T-cell (primary cell): ENCODE measurements at regions of chr6 and their contacts with region 1.

Region 1: DNA sequence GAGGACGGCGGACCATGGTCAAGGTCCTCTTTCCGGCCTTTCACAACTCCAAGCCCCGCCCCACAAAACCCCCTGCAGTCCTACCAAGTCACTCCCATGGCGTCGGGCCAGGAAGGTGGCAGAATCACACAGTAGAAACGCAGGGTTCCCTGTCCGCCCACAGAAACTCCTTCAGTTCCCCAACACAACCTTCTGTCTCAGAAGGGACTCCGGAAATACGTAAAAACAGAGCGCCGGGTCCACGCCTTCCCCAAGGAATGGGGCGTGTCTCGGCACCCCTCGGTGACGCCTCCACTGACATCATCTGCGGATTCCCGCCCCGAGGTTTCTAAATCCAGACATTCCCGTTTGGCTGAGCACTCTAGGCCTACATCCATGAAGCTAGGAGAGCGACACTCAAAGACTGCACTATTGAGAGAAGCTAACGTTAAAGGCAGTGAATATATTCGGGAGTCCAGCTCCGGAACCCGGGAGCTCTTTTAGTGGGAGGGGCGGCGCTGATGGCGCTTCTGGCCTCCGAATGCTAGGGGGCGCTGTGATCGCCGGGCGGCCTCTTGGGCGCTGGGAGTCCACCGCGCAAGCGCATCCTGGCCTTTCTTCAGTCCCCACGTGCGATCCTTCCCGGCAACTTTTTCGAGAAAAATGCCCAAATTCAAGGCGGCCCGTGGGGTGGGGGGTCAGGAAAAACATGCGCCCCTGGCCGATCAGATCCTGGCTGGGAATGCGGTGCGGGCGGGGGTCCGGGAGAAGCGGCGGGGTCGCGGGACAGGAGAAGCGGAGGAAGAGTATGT is at the starts of genes BYSL and MED20:
- DNase-seq: peak; percentile 86 to 96 (median 91)
- ATAC-seq: peak; percentile 89 to 91 (median 90)
- H3K4me3 ChIP-seq: peak within 1 kb of the TSS; percentile 93 to 99
- H3K4me3 Mint-ChIP-seq: peak within 1 kb of the TSS; percentile 89 to 99 (median 99)
- H3K27ac ChIP-seq: peak within 1 kb of the TSS; percentile 91
- H3K27ac Mint-ChIP-seq: peak within 1 kb of the TSS; percentile 98 to 99
- H3K4me1 ChIP-seq: peaks cover 20 to 47% of the 10 kb centered on the region in 2 experiments
- H3K4me1 Mint-ChIP-seq: peaks cover 57 to 60% (median 58%) of the 10 kb centered on the region in 3 donors
- H3K27me3 ChIP-seq: no peaks in the 10 kb centered on the region
- H3K27me3 Mint-ChIP-seq: peaks cover 0 to 2% of the 10 kb centered on the region in 2 donors
- total RNA-seq, gene BYSL: 3.5 to 20.5 (median 15.0) TPM
- total RNA-seq, gene MED20: 5.4 to 12.1 (median 11.1) TPM

Region 2: GRCh38 chr6:41895300-41896233 is 25.5 kb before region 1 on chr6 and contains the start of gene USP49:
- CTCF ChIA-PET with region 1: interaction called in 1 of 2 experiments, 23 read pairs
- POLR2A ChIA-PET with region 1: no interaction called
- DNase-seq: peak; percentile 77 to 94 (median 88)
- ATAC-seq: peak; percentile 94 to 98 (median 96)
- H3K4me3 ChIP-seq: peak within 1 kb of the TSS; percentile 85 to 92
- H3K4me3 Mint-ChIP-seq: no peak within 1 kb of the TSS
- H3K27ac ChIP-seq: peak within 1 kb of the TSS; percentile 59
- H3K27ac Mint-ChIP-seq: peak within 1 kb of the TSS; percentile 70 to 88
- H3K4me1 ChIP-seq: peaks cover 15 to 21% of the 10 kb centered on the region in 2 experiments
- H3K4me1 Mint-ChIP-seq: peaks cover 9 to 17% (median 11%) of the 10 kb centered on the region in 3 donors
- H3K27me3 ChIP-seq: peaks cover 0 to 6% of the 10 kb centered on the region in 2 experiments
- H3K27me3 Mint-ChIP-seq: no peaks in the 10 kb centered on the region
- total RNA-seq, gene USP49: 2.5 to 5.2 (median 3.3) TPM

Region 3: GRCh38 chr6:41941280-41942066 is 20.4 kb after region 1 on chr6 and contains the start of gene CCND3:
- CTCF ChIA-PET with region 1: interaction called, 4 to 26 read pairs
- POLR2A ChIA-PET with region 1: interaction called in 1 of 2 experiments, 3 read pairs
- DNase-seq: peak; percentile 61 to 90 (median 77)
- ATAC-seq: peak; percentile 71 to 75 (median 74)
- H3K4me3 ChIP-seq: peak within 1 kb of the TSS; percentile 73 to 91
- H3K4me3 Mint-ChIP-seq: peak within 1 kb of the TSS; percentile 81 to 93 (median 87)
- H3K27ac ChIP-seq: peak within 1 kb of the TSS; percentile 66
- H3K27ac Mint-ChIP-seq: peak within 1 kb of the TSS; percentile 89 to 92
- H3K4me1 ChIP-seq: peaks cover 56 to 66% of the 10 kb centered on the region in 2 experiments
- H3K4me1 Mint-ChIP-seq: peaks cover 63 to 75% (median 74%) of the 10 kb centered on the region in 3 donors
- H3K27me3 ChIP-seq: no peaks in the 10 kb centered on the region
- H3K27me3 Mint-ChIP-seq: no peaks in the 10 kb centered on the region
- total RNA-seq, gene CCND3: 265 to 532 (median 284) TPM

Region 4: DNA sequence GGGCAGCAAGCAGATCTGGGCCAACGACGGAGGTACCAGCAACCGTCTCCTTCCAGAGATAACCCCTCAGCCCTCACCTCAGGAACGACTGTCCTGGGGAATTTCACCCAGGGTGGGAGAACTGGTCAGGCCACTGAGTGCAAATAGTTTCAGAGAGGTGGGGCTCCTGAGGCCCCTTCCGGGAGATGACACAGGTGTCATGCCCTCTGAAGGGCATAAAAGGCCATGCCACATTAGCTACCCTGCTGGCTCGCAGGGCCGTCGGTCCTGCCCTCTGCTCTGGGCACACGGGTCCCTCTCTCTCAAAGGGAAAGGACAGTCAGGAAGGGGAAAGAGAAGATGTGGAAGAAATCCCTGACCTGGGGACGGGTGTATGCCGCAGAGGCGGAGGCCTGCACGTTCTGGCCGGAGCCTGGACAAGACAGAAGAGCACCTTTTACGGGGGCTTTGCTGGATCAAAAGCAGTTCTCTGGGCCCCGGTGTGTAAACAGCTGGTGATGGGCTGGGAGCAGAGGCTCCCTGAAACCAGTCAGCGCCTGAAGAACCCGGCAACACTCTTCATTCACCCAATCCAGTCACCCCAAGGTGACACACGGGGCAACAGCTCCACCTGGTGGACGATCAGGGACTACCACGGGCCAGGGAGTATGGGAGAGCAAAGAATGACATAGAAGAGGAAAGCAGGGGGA is 122.8 kb after region 1 on chr6:
- CTCF ChIA-PET with region 1: interaction called, 6 to 27 read pairs
- POLR2A ChIA-PET with region 1: no interaction called
- DNase-seq: peak; percentile 78 to 96 (median 91)
- ATAC-seq: peak; percentile 21 to 28 (median 24)
- H3K4me3 ChIP-seq: peak overlapping the region; percentile 44 to 60
- H3K4me3 Mint-ChIP-seq: peak overlapping the region; percentile 72 to 99 (median 73)
- H3K27ac ChIP-seq: peak overlapping the region; percentile 58
- H3K27ac Mint-ChIP-seq: peak overlapping the region; percentile 95 to 96
- H3K4me1 ChIP-seq: peaks cover 39 to 87% of the 10 kb centered on the region in 2 experiments
- H3K4me1 Mint-ChIP-seq: peaks cover 77 to 88% (median 87%) of the 10 kb centered on the region in 3 donors
- H3K27me3 ChIP-seq: no peaks in the 10 kb centered on the region
- H3K27me3 Mint-ChIP-seq: no peaks in the 10 kb centered on the region

Region 5: GRCh38 chr6:42217519-42218367 is 296.6 kb after region 1 on chr6 and contains the start of gene MRPS10:
- CTCF ChIA-PET with region 1: interaction called in 1 of 2 experiments, 10 read pairs
- POLR2A ChIA-PET with region 1: interaction called in 1 of 2 experiments, 3 read pairs
- DNase-seq: peak; percentile 72 to 95 (median 89)
- ATAC-seq: peak; percentile 99 to 100 (median 99)
- H3K4me3 ChIP-seq: peak within 1 kb of the TSS; percentile 77 to 85
- H3K4me3 Mint-ChIP-seq: peak within 1 kb of the TSS; percentile 97 to 99 (median 98)
- H3K27ac ChIP-seq: peak within 1 kb of the TSS; percentile 75
- H3K27ac Mint-ChIP-seq: peak within 1 kb of the TSS; percentile 96 to 97
- H3K4me1 ChIP-seq: peaks cover 8 to 28% of the 10 kb centered on the region in 2 experiments
- H3K4me1 Mint-ChIP-seq: peaks cover 15 to 32% (median 25%) of the 10 kb centered on the region in 3 donors
- H3K27me3 ChIP-seq: no peaks in the 10 kb centered on the region
- H3K27me3 Mint-ChIP-seq: no peaks in the 10 kb centered on the region
- total RNA-seq, gene MRPS10: 17.6 to 23.6 (median 20.5) TPM